ENCODE measurements at regions of chr12 and their contacts with region 1.

Region 1: GRCh38 chr12:12716793-12717585 is at the start of gene CDKN1B:
- DNase-seq: peak; percentile 75 to 95 (median 84)
- ATAC-seq: peak; percentile 56
- H3K4me3 ChIP-seq: peak within 1 kb of the TSS; percentile 97
- H3K4me3 Mint-ChIP-seq: peak within 1 kb of the TSS; percentile 99
- H3K27ac ChIP-seq: peak within 1 kb of the TSS; percentile 88 to 97
- H3K27ac Mint-ChIP-seq: peak within 1 kb of the TSS; percentile 95
- H3K4me1 ChIP-seq: peaks cover 38% of the 10 kb centered on the region
- H3K4me1 Mint-ChIP-seq: peaks cover 69% of the 10 kb centered on the region
- H3K27me3 ChIP-seq: no peaks in the 10 kb centered on the region
- H3K27me3 Mint-ChIP-seq: no peaks in the 10 kb centered on the region
- CTCF ChIP-seq: no peak
- total RNA-seq, gene CDKN1B: 352 TPM

Region 2: GRCh38 chr12:12467688-12468261 is 249.2 kb before region 1 on chr12:
- CTCF ChIA-PET with region 1: no interaction called
- POLR2A ChIA-PET with region 1: interaction called, 18 read pairs
- intact Hi-C with region 1: no loop called
- DNase-seq: peak in 11 of 14 experiments; percentile 15 to 87 (median 51)
- ATAC-seq: peak; percentile 23
- H3K4me3 ChIP-seq: no peak overlapping the region
- H3K4me3 Mint-ChIP-seq: peak overlapping the region; percentile 40
- H3K27ac ChIP-seq: peak overlapping the region; percentile 78 to 81
- H3K27ac Mint-ChIP-seq: peak overlapping the region; percentile 98
- H3K4me1 ChIP-seq: peaks cover 69% of the 10 kb centered on the region
- H3K4me1 Mint-ChIP-seq: peaks cover 79% of the 10 kb centered on the region
- H3K27me3 ChIP-seq: no peaks in the 10 kb centered on the region
- H3K27me3 Mint-ChIP-seq: no peaks in the 10 kb centered on the region
- CTCF ChIP-seq: no peak

Region 3: DNA sequence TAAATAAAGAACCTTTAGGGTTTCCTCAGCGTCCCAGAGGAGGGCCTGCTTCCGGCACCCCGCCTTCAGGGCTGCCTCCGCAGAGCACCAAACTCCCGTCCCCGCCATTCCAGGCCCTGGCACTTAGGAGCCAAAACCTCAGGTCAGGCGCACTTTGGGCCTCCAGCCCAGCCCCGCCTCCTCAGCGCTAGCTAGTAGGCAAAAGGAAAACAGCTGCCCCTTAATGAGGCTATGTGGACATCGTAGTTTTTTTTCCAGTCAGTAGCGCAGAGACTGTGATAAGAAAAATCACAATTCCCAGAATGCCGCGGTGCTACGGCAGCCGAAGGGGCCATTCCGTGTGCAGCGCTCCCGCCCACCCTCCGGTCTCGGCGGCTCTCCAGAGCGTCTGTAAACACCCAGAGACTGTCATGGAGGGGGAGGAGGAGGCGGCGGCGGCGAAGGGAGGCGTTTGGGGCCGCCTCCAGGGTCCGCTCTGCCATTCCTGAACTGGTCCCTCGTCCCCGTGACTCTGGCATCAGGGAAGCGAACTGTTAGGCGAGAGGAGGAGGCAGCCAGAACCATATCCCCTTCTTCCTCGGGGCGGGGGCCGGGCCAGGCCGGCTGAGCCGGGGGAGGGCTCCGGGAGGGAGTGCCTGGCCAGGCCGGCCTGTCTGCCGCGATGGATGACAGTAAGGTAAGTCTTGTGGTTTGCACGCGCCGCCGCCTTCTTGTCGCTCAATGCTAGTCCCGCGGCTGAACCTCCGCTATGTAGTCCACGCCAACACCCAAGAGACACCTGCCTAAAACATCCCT is 105.3 kb before region 1 on chr12 and contains the start of gene CREBL2:
- CTCF ChIA-PET with region 1: no interaction called
- POLR2A ChIA-PET with region 1: interaction called, 34 read pairs
- intact Hi-C with region 1: no loop called
- DNase-seq: peak; percentile 76 to 94 (median 83)
- ATAC-seq: peak; percentile 90
- H3K4me3 ChIP-seq: peak within 1 kb of the TSS; percentile 80
- H3K4me3 Mint-ChIP-seq: peak within 1 kb of the TSS; percentile 91
- H3K27ac ChIP-seq: peak within 1 kb of the TSS; percentile 92 to 97
- H3K27ac Mint-ChIP-seq: peak within 1 kb of the TSS; percentile 98
- H3K4me1 ChIP-seq: peaks cover 49% of the 10 kb centered on the region
- H3K4me1 Mint-ChIP-seq: peaks cover 71% of the 10 kb centered on the region
- H3K27me3 ChIP-seq: no peaks in the 10 kb centered on the region
- H3K27me3 Mint-ChIP-seq: no peaks in the 10 kb centered on the region
- CTCF ChIP-seq: no peak
- total RNA-seq, gene CREBL2: 9.5 to 12.6 TPM

Region 4: GRCh38 chr12:12696562-12697383 is 20.2 kb before region 1 on chr12:
- CTCF ChIA-PET with region 1: interaction called, 19 read pairs
- POLR2A ChIA-PET with region 1: interaction called, 400 read pairs
- intact Hi-C with region 1: loop called (anchors 1 kb)
- DNase-seq: peak; percentile 90 to 97 (median 92)
- ATAC-seq: peak; percentile 83
- H3K4me3 ChIP-seq: peak overlapping the region; percentile 61
- H3K4me3 Mint-ChIP-seq: peak overlapping the region; percentile 94
- H3K27ac ChIP-seq: peak overlapping the region; percentile 96 to 97
- H3K27ac Mint-ChIP-seq: peak overlapping the region; percentile 100
- H3K4me1 ChIP-seq: peaks cover 7% of the 10 kb centered on the region
- H3K4me1 Mint-ChIP-seq: peaks cover 41% of the 10 kb centered on the region
- H3K27me3 ChIP-seq: no peaks in the 10 kb centered on the region
- H3K27me3 Mint-ChIP-seq: no peaks in the 10 kb centered on the region
- CTCF ChIP-seq: no peak

Region 5: GRCh38 chr12:12736759-12737676 is 20.0 kb after region 1 on chr12:
- CTCF ChIA-PET with region 1: interaction called, 20 read pairs
- POLR2A ChIA-PET with region 1: interaction called, 414 read pairs
- intact Hi-C with region 1: loop called in 1 of 2 experiments (anchors 2 kb)
- DNase-seq: peak in 13 of 14 experiments; percentile 15 to 87 (median 33)
- ATAC-seq: peak; percentile 82
- H3K4me3 ChIP-seq: peak overlapping the region; percentile 34
- H3K4me3 Mint-ChIP-seq: peak overlapping the region; percentile 58
- H3K27ac ChIP-seq: peak overlapping the region; percentile 34 to 40
- H3K27ac Mint-ChIP-seq: peak overlapping the region; percentile 85
- H3K4me1 ChIP-seq: peaks cover 30% of the 10 kb centered on the region
- H3K4me1 Mint-ChIP-seq: peaks cover 41% of the 10 kb centered on the region
- H3K27me3 ChIP-seq: no peaks in the 10 kb centered on the region
- H3K27me3 Mint-ChIP-seq: no peaks in the 10 kb centered on the region
- CTCF ChIP-seq: peak; percentile 71

Region 6: DNA sequence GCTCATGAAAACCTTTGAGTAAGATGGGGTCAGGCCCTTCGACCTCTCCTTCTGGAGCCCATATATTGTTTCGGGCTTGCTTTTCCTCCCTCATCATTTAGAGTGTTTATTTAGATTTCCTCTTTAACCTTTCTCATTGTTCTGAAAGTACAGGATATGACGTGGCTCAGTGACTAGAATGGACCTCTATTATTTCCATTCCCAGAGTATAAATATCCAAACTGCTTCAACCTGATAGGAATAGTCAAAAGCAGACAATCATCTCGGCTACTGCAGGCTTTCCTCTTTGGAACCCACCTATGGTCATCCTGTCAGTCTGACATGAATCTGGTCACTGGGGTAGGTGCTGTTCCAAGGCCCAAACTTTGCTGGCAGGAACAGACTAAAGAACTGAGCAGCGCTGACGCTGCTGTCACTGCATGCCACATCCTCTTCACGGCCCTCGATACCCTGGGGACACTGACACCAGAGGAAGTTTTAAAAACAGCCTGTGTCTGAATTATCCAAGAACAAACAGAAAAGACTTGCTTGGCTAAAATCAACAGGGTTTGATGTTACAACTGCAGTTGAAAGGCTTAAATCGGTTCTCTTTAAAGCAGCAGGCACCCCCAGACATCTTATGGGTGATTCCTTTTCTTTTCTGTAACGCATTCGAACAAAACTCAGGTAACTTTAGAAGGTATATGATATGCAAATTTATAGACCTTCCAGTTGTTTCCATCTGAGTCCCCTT is 91.1 kb after region 1 on chr12:
- CTCF ChIA-PET with region 1: no interaction called
- POLR2A ChIA-PET with region 1: interaction called, 10 read pairs
- intact Hi-C with region 1: no loop called
- DNase-seq: peak; percentile 45 to 89 (median 61)
- ATAC-seq: peak; percentile 78
- H3K4me3 ChIP-seq: no peak overlapping the region
- H3K4me3 Mint-ChIP-seq: peak overlapping the region; percentile 72
- H3K27ac ChIP-seq: peak overlapping the region; percentile 70 to 94
- H3K27ac Mint-ChIP-seq: peak overlapping the region; percentile 97
- H3K4me1 ChIP-seq: peaks cover 49% of the 10 kb centered on the region
- H3K4me1 Mint-ChIP-seq: peaks cover 54% of the 10 kb centered on the region
- H3K27me3 ChIP-seq: no peaks in the 10 kb centered on the region
- H3K27me3 Mint-ChIP-seq: no peaks in the 10 kb centered on the region
- CTCF ChIP-seq: no peak

Measured in CD4-positive, alpha-beta T cell (primary cell).